Uterus (tissue), 4 donors: ENCODE measurements at regions of chr1 and their contacts with region 1.

Region 1: GRCh38 chr1:159891275-159892157 is 8.4 kb downstream of the CFAP45 start:
- DNase-seq: peak; percentile 74 to 77
- H3K4me3 ChIP-seq: no peak overlapping the region
- H3K27ac ChIP-seq: no peak overlapping the region
- H3K4me1 ChIP-seq: no peaks in the 10 kb centered on the region
- H3K27me3 ChIP-seq: no peaks in the 10 kb centered on the region
- CTCF ChIP-seq: peak; percentile 84 to 98 (median 93)
- POLR2A ChIP-seq: peak in 1 of 2 donors; percentile 11

Region 2: DNA sequence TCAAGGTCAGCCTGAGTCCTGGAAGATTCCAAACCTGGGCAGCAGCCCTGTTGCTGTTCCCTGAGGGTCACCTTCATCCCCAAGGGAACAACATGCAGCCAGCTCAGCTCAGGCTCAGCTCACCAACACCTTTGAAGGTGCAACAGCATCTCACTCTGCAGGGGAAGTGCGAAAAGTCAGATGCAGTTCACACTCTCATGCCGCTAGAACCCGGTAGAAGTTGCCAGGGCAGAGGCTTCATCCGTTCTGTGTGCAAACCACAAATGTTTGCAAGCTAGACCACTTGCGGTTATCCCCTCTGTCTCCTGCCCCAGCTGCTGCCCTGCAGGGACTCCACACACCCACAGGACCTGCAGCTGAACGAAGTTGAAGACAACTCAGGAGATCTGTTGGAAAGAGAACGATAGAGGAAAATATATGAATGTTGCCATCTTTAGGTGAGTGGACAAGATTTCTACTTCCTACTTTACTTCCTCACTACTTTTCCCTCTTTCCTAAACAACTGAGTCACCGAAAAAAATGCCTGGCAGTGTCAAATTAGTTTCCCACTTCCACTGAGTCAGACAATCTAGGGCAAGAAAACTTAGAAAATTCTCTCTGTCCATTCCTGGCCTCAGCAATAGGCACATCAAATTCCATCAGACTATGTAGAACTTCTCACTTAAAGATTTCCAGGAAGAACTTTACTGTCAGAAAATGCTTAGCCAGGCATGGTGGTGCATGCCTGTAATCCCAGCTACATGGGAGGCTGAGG is 91.2 kb before region 1 on chr1:
- intact Hi-C with region 1: loop called (anchors 10 kb)
- DNase-seq: no peak
- H3K4me3 ChIP-seq: no peak overlapping the region
- H3K27ac ChIP-seq: no peak overlapping the region
- H3K4me1 ChIP-seq: no peaks in the 10 kb centered on the region
- H3K27me3 ChIP-seq: no peaks in the 10 kb centered on the region
- CTCF ChIP-seq: no peak
- POLR2A ChIP-seq: no peak

Region 3: DNA sequence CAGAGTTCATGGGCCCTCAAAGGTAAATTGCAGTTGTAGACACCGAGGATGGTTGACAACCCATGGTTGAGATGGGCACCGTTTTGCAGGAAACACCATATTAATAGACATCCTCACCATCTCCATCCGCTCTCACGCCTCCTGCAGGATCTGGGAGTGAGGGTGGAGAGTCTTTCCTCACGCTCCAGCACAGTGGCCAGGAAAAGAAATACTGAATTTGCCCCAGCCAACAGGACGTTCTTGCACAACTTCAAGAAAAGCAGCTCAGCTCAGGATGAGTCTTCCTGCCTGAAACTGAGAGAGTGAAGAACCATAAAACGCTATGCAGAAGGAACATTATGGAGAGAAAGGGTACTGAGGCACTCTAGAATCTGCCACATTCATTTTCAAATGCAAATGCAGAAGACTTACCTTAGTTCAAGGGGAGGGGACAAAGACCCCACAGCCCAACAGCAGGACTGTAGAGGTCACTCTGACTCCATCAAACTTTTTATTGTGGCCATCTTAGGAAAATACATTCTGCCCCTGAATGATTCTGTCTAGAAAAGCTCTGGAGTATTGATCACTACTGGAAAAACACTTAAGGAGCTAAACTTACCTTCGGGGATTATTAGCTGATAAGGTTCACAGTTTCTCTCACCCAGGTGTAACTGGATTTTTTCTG is 55.5 kb before region 1 on chr1:
- intact Hi-C with region 1: loop called (anchors 2 kb)
- DNase-seq: no peak
- H3K4me3 ChIP-seq: no peak overlapping the region
- H3K27ac ChIP-seq: no peak overlapping the region
- H3K4me1 ChIP-seq: no peaks in the 10 kb centered on the region
- H3K27me3 ChIP-seq: no peaks in the 10 kb centered on the region
- CTCF ChIP-seq: peak in 2 of 4 experiments; percentile 6 to 10
- POLR2A ChIP-seq: no peak